ENCODE measurements at regions of chr14 and their contacts with region 1.

Region 1: DNA sequence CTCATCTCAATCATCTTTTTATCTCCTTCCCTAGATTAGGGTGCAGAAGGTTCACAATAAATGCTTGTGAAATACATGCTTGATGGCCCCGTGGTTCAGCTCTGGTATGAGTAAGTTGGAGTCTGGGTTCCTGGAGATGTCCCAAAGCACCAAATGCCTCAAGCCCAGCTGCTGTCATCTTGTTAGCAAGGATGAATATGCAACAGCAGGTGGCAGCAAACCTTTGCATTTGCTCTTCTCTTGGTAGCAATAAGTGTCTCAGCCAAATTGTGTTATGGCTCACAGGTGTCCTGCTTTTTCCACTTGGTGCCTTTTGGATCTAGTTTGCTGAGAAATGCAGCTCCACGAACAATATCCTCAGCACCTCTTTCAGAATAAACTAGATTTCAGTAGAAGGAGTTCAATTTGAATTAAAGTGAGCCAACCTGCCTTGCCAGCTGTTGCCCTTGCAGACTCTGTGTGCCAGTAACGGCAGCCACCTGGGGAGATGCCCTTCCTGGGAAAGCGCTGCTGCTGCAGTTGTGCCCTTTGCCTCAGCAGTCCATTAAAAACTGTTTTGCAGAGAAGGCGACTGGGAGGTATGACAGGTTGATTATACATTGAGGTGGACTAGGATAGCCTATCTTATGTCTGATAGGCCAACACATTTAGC is 417.3 kb downstream of the SNAPC1 start:
- DNase-seq: peak; percentile 51
- H3K4me3 Mint-ChIP-seq: no peak overlapping the region
- H3K27ac Mint-ChIP-seq: no peak overlapping the region
- H3K4me1 Mint-ChIP-seq: no peaks in the 10 kb centered on the region
- H3K27me3 Mint-ChIP-seq: peaks cover 17% of the 10 kb centered on the region
- CTCF ChIP-seq: peak; percentile 55

Region 2: DNA sequence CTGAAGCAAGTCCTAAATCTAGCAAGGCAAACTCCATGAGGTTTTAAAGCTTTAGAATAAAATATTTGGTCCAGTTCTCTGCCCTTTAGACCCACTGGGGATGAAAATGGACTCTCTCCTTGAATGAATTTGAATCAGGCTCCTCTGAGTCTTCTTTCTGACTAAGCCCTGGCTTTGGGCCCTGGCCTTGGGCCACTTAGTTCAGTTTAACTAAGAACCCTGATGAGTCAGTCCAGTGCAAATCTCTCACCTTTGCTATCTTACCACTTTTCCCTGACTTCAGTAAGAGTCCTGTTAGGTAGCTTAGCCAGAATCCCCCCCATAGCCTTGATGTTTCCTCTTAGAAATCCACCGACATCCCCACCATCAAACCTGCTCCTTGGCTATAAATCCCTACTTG is 10.2 kb after region 1 on chr14:
- CTCF ChIA-PET with region 1: no interaction called
- intact Hi-C with region 1: no loop called
- DNase-seq: no peak
- H3K4me3 Mint-ChIP-seq: no peak overlapping the region
- H3K27ac Mint-ChIP-seq: no peak overlapping the region
- H3K4me1 Mint-ChIP-seq: no peaks in the 10 kb centered on the region
- H3K27me3 Mint-ChIP-seq: peaks cover 62% of the 10 kb centered on the region
- CTCF ChIP-seq: no peak

Region 3: DNA sequence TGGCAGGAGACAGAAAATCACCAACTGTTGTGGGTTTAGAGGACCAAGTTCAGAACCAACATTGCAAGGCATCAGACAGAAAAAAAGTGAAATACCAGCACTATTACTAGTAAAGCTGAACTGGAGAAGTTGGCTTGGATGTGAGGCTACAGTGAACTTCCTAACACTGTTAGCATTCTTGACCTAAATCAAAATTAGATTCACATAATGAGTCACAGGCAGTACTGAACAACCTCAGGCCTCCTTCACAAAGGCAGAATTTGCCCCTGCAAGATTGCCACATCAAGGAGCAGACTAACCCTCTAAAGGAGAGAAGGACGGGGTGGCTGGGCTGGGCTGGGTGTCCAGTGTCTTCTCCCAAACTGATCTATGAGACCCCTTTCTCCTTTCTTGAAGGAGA is 122.4 kb after region 1 on chr14:
- CTCF ChIA-PET with region 1: no interaction called
- intact Hi-C with region 1: loop called (anchors 10 kb)
- DNase-seq: no peak
- H3K4me3 Mint-ChIP-seq: no peak overlapping the region
- H3K27ac Mint-ChIP-seq: no peak overlapping the region
- H3K4me1 Mint-ChIP-seq: peaks cover 51% of the 10 kb centered on the region
- H3K27me3 Mint-ChIP-seq: no peaks in the 10 kb centered on the region
- CTCF ChIP-seq: no peak

Region 4: GRCh38 chr14:62373889-62374394 is 194.4 kb after region 1 on chr14:
- CTCF ChIA-PET with region 1: no interaction called
- intact Hi-C with region 1: loop called (anchors 2 kb)
- DNase-seq: no peak
- H3K4me3 Mint-ChIP-seq: no peak overlapping the region
- H3K27ac Mint-ChIP-seq: no peak overlapping the region
- H3K4me1 Mint-ChIP-seq: peaks cover 5% of the 10 kb centered on the region
- H3K27me3 Mint-ChIP-seq: no peaks in the 10 kb centered on the region
- CTCF ChIP-seq: no peak

Region 5: GRCh38 chr14:63039800-63040380 is 860.4 kb after region 1 on chr14:
- CTCF ChIA-PET with region 1: no interaction called
- intact Hi-C with region 1: loop called (anchors 2 kb)
- DNase-seq: peak; percentile 17
- H3K4me3 Mint-ChIP-seq: no peak overlapping the region
- H3K27ac Mint-ChIP-seq: no peak overlapping the region
- H3K4me1 Mint-ChIP-seq: no peaks in the 10 kb centered on the region
- H3K27me3 Mint-ChIP-seq: peaks cover 20% of the 10 kb centered on the region
- CTCF ChIP-seq: peak; percentile 36

Region 6: GRCh38 chr14:63134801-63135200 is 955.3 kb after region 1 on chr14:
- CTCF ChIA-PET with region 1: interaction called, 4 read pairs
- intact Hi-C with region 1: loop called (anchors 1 kb)
- DNase-seq: peak; percentile 11
- H3K4me3 Mint-ChIP-seq: no peak overlapping the region
- H3K27ac Mint-ChIP-seq: no peak overlapping the region
- H3K4me1 Mint-ChIP-seq: peaks cover 9% of the 10 kb centered on the region
- H3K27me3 Mint-ChIP-seq: no peaks in the 10 kb centered on the region
- CTCF ChIP-seq: no peak

Region 7: GRCh38 chr14:63276492-63277342 is 1097.2 kb after region 1 on chr14:
- CTCF ChIA-PET with region 1: no interaction called
- intact Hi-C with region 1: loop called (anchors 1 kb)
- DNase-seq: peak; percentile 12
- H3K4me3 Mint-ChIP-seq: no peak overlapping the region
- H3K27ac Mint-ChIP-seq: no peak overlapping the region
- H3K4me1 Mint-ChIP-seq: no peaks in the 10 kb centered on the region
- H3K27me3 Mint-ChIP-seq: no peaks in the 10 kb centered on the region
- CTCF ChIP-seq: peak; percentile 49

Measured in Calu3 (cell line).